AG04450 (cell line): ENCODE measurements at regions of chr12 and their contacts with region 1.

Region 1: GRCh38 chr12:116818948-116819832 is 62.1 kb downstream of the HRK start:
- DNase-seq: peak; percentile 83
- H3K4me3 ChIP-seq: peak overlapping the region; percentile 97
- H3K27ac ChIP-seq: peak overlapping the region; percentile 96
- H3K27me3 ChIP-seq: peaks cover 5% of the 10 kb centered on the region
- CTCF ChIP-seq: no peak

Region 2: GRCh38 chr12:116843085-116843484 is 23.9 kb after region 1 on chr12:
- CTCF ChIA-PET with region 1: no interaction called
- POLR2A ChIA-PET with region 1: interaction called, 10 read pairs
- DNase-seq: no peak
- H3K4me3 ChIP-seq: no peak overlapping the region
- H3K27ac ChIP-seq: no peak overlapping the region
- H3K27me3 ChIP-seq: no peaks in the 10 kb centered on the region
- CTCF ChIP-seq: no peak